Gastrocnemius medialis (tissue), 4 donors: ENCODE measurements at regions of chr7 and their contacts with region 1.

Region 1: DNA sequence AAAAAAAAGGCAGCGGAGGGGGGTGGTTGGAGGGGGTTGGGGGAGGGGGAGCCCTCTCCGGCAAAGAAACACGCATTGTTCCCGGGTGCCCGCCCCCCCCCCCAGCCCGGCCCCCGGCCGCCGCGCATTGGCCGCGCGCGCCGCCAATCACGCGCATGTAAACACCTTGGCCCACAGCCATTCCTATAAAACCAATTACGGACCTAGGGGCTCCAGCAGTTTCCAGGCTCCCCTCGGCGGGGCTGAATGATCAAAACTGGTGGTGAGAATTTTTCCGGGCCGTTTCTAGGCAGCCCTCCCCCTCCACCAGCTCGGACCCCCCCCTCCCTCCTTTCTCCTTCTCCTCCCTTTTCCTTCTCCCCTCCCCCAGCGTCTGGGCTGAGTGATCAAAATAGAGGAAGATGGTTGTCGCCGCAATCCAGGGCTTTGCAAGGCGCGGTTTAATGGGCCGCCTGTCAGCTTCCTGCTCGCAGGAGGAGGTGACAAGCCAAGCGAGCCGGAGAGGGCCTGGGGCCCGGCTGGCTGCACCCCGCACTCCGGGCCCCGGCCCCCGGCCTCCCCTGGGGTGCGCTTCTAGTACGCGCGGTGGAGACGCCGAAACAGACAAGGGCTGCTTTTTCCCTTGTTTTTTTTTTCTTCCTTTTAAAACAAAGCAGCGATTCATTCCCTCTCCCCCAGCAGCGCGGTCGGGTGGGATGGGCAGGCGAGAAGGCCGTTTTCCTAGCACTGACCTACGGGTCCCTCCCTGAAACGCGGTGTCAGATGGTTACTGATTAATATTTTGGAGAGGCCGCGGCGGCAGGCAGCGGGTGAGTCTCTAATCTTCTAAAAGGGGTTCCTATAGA is 432 bp upstream of the TNRC18 start:
- DNase-seq: peak; percentile 95 to 96
- ATAC-seq: peak; percentile 17 to 27
- H3K4me3 ChIP-seq: peak overlapping the region; percentile 76 to 97 (median 92)
- H3K27ac ChIP-seq: peak overlapping the region; percentile 94 to 100 (median 100)
- H3K4me1 ChIP-seq: peaks cover 3 to 16% of the 10 kb centered on the region in 2 donors
- H3K27me3 ChIP-seq: no peaks in the 10 kb centered on the region
- CTCF ChIP-seq: no peak
- POLR2A ChIP-seq: peak; percentile 66 to 78

Region 2: DNA sequence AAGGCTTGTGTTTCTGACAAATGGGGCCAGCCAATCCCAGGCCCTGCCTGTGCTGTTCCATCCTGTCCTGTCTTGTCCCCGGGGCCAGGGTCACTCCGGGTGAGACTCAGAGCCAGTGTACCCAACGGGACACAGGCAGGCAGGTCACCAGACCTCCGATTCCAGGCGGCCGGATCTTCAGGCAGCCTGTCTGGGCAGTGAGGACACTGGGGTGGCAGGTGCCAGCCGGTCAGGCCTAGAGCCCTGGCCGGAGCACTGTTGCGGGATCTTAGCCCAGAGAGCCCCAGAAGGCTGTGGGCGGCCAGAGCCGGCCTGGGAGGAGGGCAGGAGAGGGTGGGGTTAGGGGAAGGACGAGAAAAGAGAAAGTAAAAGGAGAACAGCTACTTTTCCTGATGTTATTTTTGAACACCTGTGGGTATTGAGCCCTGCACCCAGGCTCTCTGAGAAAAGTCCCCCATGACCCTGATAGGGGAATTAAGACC is 133.9 kb after region 1 on chr7:
- in situ Hi-C with region 1: no loop called
- intact Hi-C with region 1: loop called (anchors 2 kb)
- DNase-seq: peak; percentile 92 to 99
- ATAC-seq: peak; percentile 58 to 64
- H3K4me3 ChIP-seq: peak overlapping the region; percentile 20 to 90 (median 30)
- H3K27ac ChIP-seq: peak overlapping the region; percentile 94 to 99 (median 98)
- H3K4me1 ChIP-seq: peaks cover 41 to 42% of the 10 kb centered on the region in 2 donors
- H3K27me3 ChIP-seq: peaks cover 5 to 8% (median 8%) of the 10 kb centered on the region in 3 donors
- CTCF ChIP-seq: no peak
- POLR2A ChIP-seq: peak; percentile 50 to 77